Posterior vena cava (tissue), 2 donors: ENCODE measurements at regions of chr11 and their contacts with region 1.

Region 1: DNA sequence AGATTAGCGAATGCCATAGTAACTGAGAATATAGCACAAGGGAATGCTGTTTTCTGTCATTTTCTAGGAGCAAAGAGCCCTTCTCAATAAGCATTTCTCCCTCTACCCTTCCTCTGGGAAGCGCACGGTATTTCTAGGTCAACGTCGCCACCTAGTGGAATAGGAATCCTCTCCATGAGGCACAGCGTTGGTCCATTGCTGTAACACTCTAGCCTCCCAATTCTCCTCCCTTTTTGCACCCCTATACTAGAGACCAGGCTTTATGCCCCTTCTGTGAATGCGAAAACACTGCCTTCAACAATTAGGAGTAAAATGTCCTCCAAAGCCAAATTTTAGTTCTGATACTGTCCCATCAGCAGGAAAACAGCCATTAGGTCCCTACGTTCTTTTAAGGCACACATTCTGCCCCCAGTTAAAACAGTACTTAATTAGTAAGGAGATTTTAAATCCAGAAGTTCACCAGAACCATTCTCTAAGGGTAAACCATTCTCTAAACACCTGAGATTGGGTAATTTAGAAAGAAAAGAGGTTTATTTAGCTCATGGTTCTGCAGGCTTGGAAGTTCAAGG is 12.8 kb upstream of the HYLS1 start:
- DNase-seq: no peak

Region 2: GRCh38 chr11:125625630-125626287 is 248.9 kb before region 1 on chr11:
- intact Hi-C with region 1: loop called in 1 of 2 experiments (anchors 10 kb)
- DNase-seq: peak; percentile 96